CD8-positive, alpha-beta T cell (primary cell): ENCODE measurements at regions of chr5 and their contacts with region 1.

Region 1: DNA sequence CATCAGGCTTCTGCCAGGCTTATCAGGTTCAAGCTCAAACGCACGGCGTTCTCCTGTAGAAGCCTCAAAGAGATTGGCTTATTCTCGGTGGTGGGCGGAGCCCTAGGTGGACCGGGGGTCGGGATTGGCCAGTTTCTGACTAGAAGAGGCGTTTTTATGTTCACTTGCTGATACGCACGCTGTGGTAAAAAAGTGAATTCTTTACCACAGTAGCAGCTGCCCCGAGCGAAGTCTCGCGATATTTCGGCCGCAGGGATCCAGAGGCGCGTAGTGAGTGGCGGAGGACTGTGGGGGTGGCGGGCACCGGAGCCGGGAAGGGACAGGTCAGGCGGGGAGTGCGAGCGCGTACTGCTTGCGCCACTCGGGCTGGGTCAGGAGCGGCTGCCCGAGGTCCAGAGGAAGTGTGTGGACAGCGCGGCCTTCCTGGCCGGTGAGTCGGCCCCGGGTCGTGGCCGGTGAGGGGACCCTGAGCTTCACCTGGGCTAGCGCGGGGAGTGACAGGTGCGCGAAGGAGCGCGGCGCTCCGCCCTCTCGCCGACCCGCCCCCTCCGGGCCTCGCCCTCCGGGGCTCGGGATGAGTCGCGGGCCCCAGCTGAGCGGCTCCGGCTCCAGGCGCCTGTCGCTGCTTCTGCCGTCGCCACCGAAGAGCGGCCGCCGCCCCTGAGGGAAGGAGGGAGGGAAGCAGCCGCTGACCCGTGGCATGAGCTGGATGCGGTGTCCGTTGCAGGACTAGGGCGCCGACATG is at the start of gene DMXL1:
- DNase-seq: peak; percentile 95 to 99 (median 98)
- ATAC-seq: peak; percentile 83
- H3K4me3 ChIP-seq: peak within 1 kb of the TSS; percentile 69 to 79
- H3K4me3 Mint-ChIP-seq: peak within 1 kb of the TSS; percentile 100
- H3K27ac ChIP-seq: peak within 1 kb of the TSS; percentile 92 to 93
- H3K27ac Mint-ChIP-seq: peak within 1 kb of the TSS; percentile 100
- H3K4me1 ChIP-seq: peaks cover 25% of the 10 kb centered on the region
- H3K4me1 Mint-ChIP-seq: peaks cover 42% of the 10 kb centered on the region
- H3K27me3 ChIP-seq: no peaks in the 10 kb centered on the region
- H3K27me3 Mint-ChIP-seq: no peaks in the 10 kb centered on the region
- CTCF ChIP-seq: no peak
- total RNA-seq, gene DMXL1: 28.7 to 32.4 TPM

Region 2: GRCh38 chr5:118956727-118957126 is 114.3 kb before region 1 on chr5:
- CTCF ChIA-PET with region 1: no interaction called
- POLR2A ChIA-PET with region 1: no interaction called
- intact Hi-C with region 1: no loop called
- DNase-seq: no peak
- ATAC-seq: no peak
- H3K4me3 ChIP-seq: no peak overlapping the region
- H3K4me3 Mint-ChIP-seq: no peak overlapping the region
- H3K27ac ChIP-seq: no peak overlapping the region
- H3K27ac Mint-ChIP-seq: no peak overlapping the region
- H3K4me1 ChIP-seq: no peaks in the 10 kb centered on the region
- H3K4me1 Mint-ChIP-seq: no peaks in the 10 kb centered on the region
- H3K27me3 ChIP-seq: no peaks in the 10 kb centered on the region
- H3K27me3 Mint-ChIP-seq: no peaks in the 10 kb centered on the region
- CTCF ChIP-seq: no peak

Region 3: GRCh38 chr5:119022017-119022745 is 48.8 kb before region 1 on chr5:
- CTCF ChIA-PET with region 1: no interaction called
- POLR2A ChIA-PET with region 1: no interaction called
- intact Hi-C with region 1: no loop called
- DNase-seq: peak in 2 of 9 experiments; percentile 48 to 56
- ATAC-seq: peak; percentile 42
- H3K4me3 ChIP-seq: no peak overlapping the region
- H3K4me3 Mint-ChIP-seq: no peak overlapping the region
- H3K27ac ChIP-seq: no peak overlapping the region
- H3K27ac Mint-ChIP-seq: no peak overlapping the region
- H3K4me1 ChIP-seq: no peaks in the 10 kb centered on the region
- H3K4me1 Mint-ChIP-seq: no peaks in the 10 kb centered on the region
- H3K27me3 ChIP-seq: no peaks in the 10 kb centered on the region
- H3K27me3 Mint-ChIP-seq: no peaks in the 10 kb centered on the region
- CTCF ChIP-seq: peak; percentile 50

Region 4: DNA sequence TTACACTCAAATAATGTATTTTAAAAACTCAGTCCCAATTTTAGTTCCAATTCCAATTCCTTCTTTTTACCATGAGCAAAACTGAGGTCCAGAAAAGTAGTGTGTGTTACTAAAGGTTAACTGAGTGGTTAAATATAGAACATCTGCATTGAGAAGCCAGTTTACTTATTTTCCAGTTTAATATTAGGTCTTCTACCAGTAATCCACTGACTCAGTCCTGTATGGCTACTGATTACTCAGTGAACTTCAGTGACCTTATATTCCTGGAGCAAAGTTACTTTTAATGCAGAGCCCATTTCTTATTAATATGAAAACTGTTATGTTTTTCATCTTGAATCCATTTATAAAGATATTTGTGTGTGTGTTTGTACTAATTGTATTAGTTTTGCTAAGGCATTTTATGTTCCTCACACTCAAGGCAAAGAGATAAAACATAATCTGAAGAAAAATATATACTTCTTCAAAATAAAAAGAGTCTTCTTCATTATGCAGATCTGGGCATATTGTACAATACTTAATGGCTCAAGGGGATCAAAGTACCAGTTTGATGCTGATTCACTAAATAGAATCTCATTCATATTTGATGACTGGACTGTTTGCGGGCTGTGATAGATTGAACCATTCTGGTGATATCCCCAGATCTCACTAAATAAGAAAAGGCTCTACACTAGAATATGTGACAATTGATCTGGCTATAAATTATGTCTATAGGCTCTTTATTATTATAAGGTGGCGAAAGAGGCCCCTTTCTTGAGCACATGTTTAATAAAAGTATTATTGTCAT is 60.7 kb after region 1 on chr5:
- CTCF ChIA-PET with region 1: no interaction called
- POLR2A ChIA-PET with region 1: no interaction called
- intact Hi-C with region 1: no loop called
- DNase-seq: no peak
- ATAC-seq: no peak
- H3K4me3 ChIP-seq: no peak overlapping the region
- H3K4me3 Mint-ChIP-seq: no peak overlapping the region
- H3K27ac ChIP-seq: no peak overlapping the region
- H3K27ac Mint-ChIP-seq: no peak overlapping the region
- H3K4me1 ChIP-seq: no peaks in the 10 kb centered on the region
- H3K4me1 Mint-ChIP-seq: no peaks in the 10 kb centered on the region
- H3K27me3 ChIP-seq: no peaks in the 10 kb centered on the region
- H3K27me3 Mint-ChIP-seq: no peaks in the 10 kb centered on the region
- CTCF ChIP-seq: no peak

Region 5: DNA sequence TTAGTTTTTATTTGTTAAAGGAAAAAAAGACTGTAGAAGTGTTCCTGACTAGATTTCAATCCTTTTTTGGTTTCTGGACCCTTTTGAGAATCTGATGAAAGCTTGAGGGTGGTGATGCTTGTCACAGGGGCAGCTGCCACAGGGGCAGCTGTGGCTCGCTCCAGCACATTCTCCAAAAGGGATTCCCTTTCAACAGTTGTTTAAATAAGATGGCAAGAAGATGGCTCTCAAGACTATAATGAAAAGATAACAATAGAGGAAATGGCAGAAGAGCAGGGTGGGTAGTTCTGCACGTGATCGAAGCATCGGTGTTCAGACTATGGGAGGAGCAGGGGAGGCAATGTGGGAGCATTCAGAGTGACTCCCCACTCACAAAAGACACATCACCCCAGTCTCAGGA is 238.3 kb after region 1 on chr5:
- CTCF ChIA-PET with region 1: interaction called, 3 read pairs
- POLR2A ChIA-PET with region 1: interaction called, 6 read pairs
- intact Hi-C with region 1: loop called in 1 of 2 experiments (anchors 2 kb)
- DNase-seq: peak in 1 of 9 experiments; percentile 57
- ATAC-seq: peak; percentile 25
- H3K4me3 ChIP-seq: no peak overlapping the region
- H3K4me3 Mint-ChIP-seq: peak overlapping the region; percentile 78
- H3K27ac ChIP-seq: peak overlapping the region; percentile 30 to 67
- H3K27ac Mint-ChIP-seq: peak overlapping the region; percentile 99
- H3K4me1 ChIP-seq: peaks cover 97% of the 10 kb centered on the region
- H3K4me1 Mint-ChIP-seq: peaks cover 96% of the 10 kb centered on the region
- H3K27me3 ChIP-seq: no peaks in the 10 kb centered on the region
- H3K27me3 Mint-ChIP-seq: no peaks in the 10 kb centered on the region
- CTCF ChIP-seq: no peak

Region 6: GRCh38 chr5:119452373-119453039 is 381.5 kb after region 1 on chr5 and contains the start of gene HSD17B4:
- CTCF ChIA-PET with region 1: no interaction called
- POLR2A ChIA-PET with region 1: interaction called, 6 read pairs
- intact Hi-C with region 1: loop called (anchors 1 to 5 kb)
- DNase-seq: peak; percentile 52 to 87 (median 81)
- ATAC-seq: peak; percentile 95
- H3K4me3 ChIP-seq: peak within 1 kb of the TSS; percentile 81 to 87
- H3K4me3 Mint-ChIP-seq: peak within 1 kb of the TSS; percentile 92
- H3K27ac ChIP-seq: peak within 1 kb of the TSS; percentile 66 to 73
- H3K27ac Mint-ChIP-seq: peak within 1 kb of the TSS; percentile 88
- H3K4me1 ChIP-seq: peaks cover 16% of the 10 kb centered on the region
- H3K4me1 Mint-ChIP-seq: peaks cover 21% of the 10 kb centered on the region
- H3K27me3 ChIP-seq: no peaks in the 10 kb centered on the region
- H3K27me3 Mint-ChIP-seq: no peaks in the 10 kb centered on the region
- CTCF ChIP-seq: no peak
- total RNA-seq, gene HSD17B4: 7.4 to 8.6 TPM